Gastrocnemius medialis (tissue), 4 donors: ENCODE measurements at regions of chr22 and their contacts with region 1.

Region 1: GRCh38 chr22:37316875-37317371 is 34.6 kb downstream of the CYTH4 start:
- DNase-seq: peak; percentile 24 to 32
- ATAC-seq: peak; percentile 56 to 73
- H3K4me3 ChIP-seq: no peak overlapping the region
- H3K27ac ChIP-seq: no peak overlapping the region
- H3K4me1 ChIP-seq: no peaks in the 10 kb centered on the region
- H3K27me3 ChIP-seq: no peaks in the 10 kb centered on the region
- CTCF ChIP-seq: peak; percentile 52 to 71 (median 64)
- POLR2A ChIP-seq: no peak

Region 2: GRCh38 chr22:37428649-37429586 is 112.0 kb after region 1 on chr22:
- in situ Hi-C with region 1: no loop called
- intact Hi-C with region 1: loop called (anchors 10 kb)
- DNase-seq: no peak
- ATAC-seq: no peak
- H3K4me3 ChIP-seq: no peak overlapping the region
- H3K27ac ChIP-seq: no peak overlapping the region
- H3K4me1 ChIP-seq: no peaks in the 10 kb centered on the region
- H3K27me3 ChIP-seq: peaks cover 60 to 86% (median 72%) of the 10 kb centered on the region in 3 donors
- CTCF ChIP-seq: peak in 2 of 5 experiments; percentile 14 to 29
- POLR2A ChIP-seq: no peak

Region 3: GRCh38 chr22:37457093-37457893 is 140.4 kb after region 1 on chr22:
- in situ Hi-C with region 1: loop called in 1 of 4 experiments (anchors 10 kb)
- intact Hi-C with region 1: loop called (anchors 2 kb)
- DNase-seq: peak in 1 of 2 donors; percentile 17
- ATAC-seq: peak in 1 of 2 donors; percentile 44
- H3K4me3 ChIP-seq: no peak overlapping the region
- H3K27ac ChIP-seq: no peak overlapping the region
- H3K4me1 ChIP-seq: no peaks in the 10 kb centered on the region
- H3K27me3 ChIP-seq: peaks cover 0 to 42% (median 19%) of the 10 kb centered on the region in 3 donors
- CTCF ChIP-seq: peak; percentile 37 to 69 (median 63)
- POLR2A ChIP-seq: no peak